ENCODE measurements at regions of chr6 and their contacts with region 1.

Region 1: GRCh38 chr6:137873273-137873762 is 6.3 kb downstream of the TNFAIP3 start:
- DNase-seq: peak; percentile 54
- CTCF ChIP-seq: no peak

Region 2: GRCh38 chr6:136607932-136608772 is 1265.2 kb before region 1 on chr6:
- CTCF ChIA-PET with region 1: no interaction called
- POLR2A ChIA-PET with region 1: no interaction called
- DNase-seq: peak; percentile 65
- CTCF ChIP-seq: peak; percentile 73

Region 3: GRCh38 chr6:137717074-137718073 is 155.9 kb before region 1 on chr6:
- CTCF ChIA-PET with region 1: interaction called, 13 read pairs
- POLR2A ChIA-PET with region 1: no interaction called
- DNase-seq: no peak
- CTCF ChIP-seq: no peak

Region 4: GRCh38 chr6:137927777-137928218 is 54.5 kb after region 1 on chr6:
- CTCF ChIA-PET with region 1: interaction called, 37 read pairs
- POLR2A ChIA-PET with region 1: no interaction called
- DNase-seq: peak; percentile 54
- CTCF ChIP-seq: no peak

Region 5: DNA sequence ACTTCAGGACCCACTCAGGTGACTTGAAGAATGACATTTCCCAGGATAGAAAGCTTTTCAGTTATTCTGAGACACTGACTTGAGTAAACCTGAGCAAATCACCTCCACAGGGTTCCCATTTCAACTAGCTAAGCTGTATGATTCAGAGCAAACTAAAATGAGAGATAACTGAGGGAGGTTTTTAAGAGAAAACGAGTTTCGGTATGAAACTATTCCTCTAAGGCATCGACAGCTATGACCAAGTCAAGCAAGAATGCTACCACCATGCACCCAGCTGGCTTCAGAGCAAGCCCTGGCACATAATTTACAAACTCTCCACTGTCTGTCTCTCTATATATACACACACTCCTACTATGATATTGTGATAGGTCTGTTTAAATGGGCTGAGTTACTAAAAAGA is 158.5 kb after region 1 on chr6:
- CTCF ChIA-PET with region 1: no interaction called
- POLR2A ChIA-PET with region 1: no interaction called
- DNase-seq: no peak
- CTCF ChIP-seq: no peak